Dendritic cell treated with granulocyte-macrophage colony-stimulating factor and Interleukin-4, amounts not matched to agents 40 ng/mL and 50 ng/mL, for 4 days (primary cell): ENCODE measurements at regions of chr14 and their contacts with region 1.

Region 1: DNA sequence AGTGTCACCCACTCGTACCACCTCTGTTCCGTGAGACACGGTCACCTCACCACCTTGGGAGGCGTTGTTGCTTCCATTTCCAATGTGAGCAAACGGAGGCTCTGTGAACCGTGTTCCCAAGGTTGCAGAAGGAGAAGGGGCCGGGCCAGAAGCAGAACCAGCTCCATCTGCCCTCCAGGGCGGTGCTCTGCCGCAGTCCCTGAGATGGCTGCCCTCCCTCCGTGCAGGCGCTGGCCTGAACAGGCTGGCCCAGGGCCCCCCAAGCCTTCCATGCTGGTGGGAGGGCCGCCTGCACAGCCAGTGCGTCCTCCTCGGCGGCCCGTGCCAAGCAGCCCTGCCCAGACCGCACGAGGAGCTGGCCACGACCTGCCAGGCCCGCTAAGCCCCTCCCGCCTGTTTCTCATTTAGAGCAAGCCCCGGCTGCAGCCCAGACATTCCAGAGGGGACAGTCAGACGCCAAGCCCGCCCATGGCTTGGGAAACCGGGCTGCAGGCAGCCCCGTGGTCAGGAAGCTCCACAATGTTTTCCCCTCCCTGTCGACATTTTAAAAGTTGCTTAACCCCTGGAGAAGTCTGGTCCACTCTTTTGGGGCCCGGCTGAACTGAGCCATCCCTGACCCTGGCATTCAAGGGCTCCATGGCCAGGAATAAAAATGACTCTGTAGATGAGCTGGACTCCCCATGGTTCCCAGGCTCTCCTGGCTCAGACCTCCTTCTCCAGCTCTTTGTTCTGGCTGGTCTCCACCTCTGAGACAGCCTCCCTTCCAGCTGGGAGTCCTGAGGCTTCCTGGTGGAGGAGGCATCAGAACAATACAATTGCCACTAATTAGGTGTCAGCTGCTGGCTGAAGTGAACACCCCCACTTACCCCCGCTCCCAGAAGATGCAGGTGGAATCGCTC is 236.0 kb downstream of the BCL11B start:
- H3K4me3 Mint-ChIP-seq: peak overlapping the region; percentile 80
- H3K27ac Mint-ChIP-seq: peak overlapping the region; percentile 94
- H3K4me1 Mint-ChIP-seq: peaks cover 55% of the 10 kb centered on the region
- H3K27me3 Mint-ChIP-seq: no peaks in the 10 kb centered on the region

Region 2: DNA sequence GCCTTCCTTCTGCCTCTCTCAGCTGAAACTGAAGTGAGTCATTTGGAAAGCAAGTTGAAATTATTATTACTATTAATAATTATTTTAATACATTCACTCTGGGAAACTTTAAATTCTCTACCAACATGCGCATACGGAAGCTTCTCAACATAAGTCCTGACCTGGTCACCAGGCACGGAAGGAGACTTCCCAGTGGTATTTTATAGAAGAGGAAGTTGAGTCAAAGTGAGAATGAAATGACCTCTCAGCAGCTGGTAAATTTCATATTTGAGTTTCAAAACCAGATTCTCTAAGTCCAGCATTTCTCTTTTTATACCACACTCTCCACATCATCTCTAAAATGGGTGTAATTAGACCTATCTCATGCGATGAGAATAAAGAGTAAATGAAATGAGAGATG is 1491.4 kb before region 1 on chr14:
- intact Hi-C with region 1: loop called (anchors 10 kb)
- H3K4me3 Mint-ChIP-seq: peak overlapping the region; percentile 49
- H3K27ac Mint-ChIP-seq: peak overlapping the region; percentile 88
- H3K4me1 Mint-ChIP-seq: peaks cover 54% of the 10 kb centered on the region
- H3K27me3 Mint-ChIP-seq: peaks cover 23% of the 10 kb centered on the region

Region 3: GRCh38 chr14:98957211-98958047 is 78.5 kb before region 1 on chr14:
- intact Hi-C with region 1: loop called (anchors 5 kb)
- H3K4me3 Mint-ChIP-seq: peak overlapping the region; percentile 52
- H3K27ac Mint-ChIP-seq: peak overlapping the region; percentile 67
- H3K4me1 Mint-ChIP-seq: peaks cover 51% of the 10 kb centered on the region
- H3K27me3 Mint-ChIP-seq: no peaks in the 10 kb centered on the region

Region 4: DNA sequence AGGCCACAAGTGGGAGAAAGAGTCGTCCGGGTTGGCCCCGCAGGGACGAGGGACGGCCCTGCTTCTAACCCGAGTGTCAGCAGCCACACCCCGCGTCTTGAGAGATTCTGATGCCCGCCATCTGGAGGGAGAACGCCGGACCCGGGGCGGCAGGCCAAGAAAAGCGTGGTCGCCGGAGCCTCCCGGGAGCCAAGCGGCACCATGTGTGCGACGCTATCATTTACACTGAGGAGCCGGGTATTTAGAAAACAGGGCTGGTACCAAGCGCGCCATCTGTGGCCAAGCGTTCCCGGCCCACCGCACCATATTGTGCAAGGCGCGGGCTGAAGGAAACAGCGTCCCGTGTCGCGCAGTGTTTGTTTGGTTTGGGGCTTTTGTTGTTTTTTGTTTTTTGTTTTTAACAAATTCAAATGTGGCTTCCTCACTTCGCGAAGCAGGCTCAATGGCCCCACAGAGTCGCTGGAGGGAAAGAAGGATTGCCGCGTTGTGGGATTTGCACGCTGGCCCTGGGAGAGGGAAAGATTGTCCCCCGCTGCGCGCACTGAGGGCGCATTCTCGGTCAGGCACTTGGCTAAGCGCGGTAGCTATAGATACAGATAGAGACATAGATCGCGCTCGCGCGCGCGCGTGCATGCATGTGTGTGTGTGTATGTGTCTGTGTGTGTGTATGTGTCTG is 82.2 kb after region 1 on chr14:
- intact Hi-C with region 1: no loop called
- H3K4me3 Mint-ChIP-seq: peak overlapping the region; percentile 34
- H3K27ac Mint-ChIP-seq: no peak overlapping the region
- H3K4me1 Mint-ChIP-seq: peaks cover 7% of the 10 kb centered on the region
- H3K27me3 Mint-ChIP-seq: peaks cover 58% of the 10 kb centered on the region

Region 5: GRCh38 chr14:99480917-99481744 is 445.2 kb after region 1 on chr14 and contains the start of gene CCNK:
- intact Hi-C with region 1: loop called (anchors 10 kb)
- H3K4me3 Mint-ChIP-seq: peak within 1 kb of the TSS; percentile 94
- H3K27ac Mint-ChIP-seq: peak within 1 kb of the TSS; percentile 98
- H3K4me1 Mint-ChIP-seq: peaks cover 47% of the 10 kb centered on the region
- H3K27me3 Mint-ChIP-seq: no peaks in the 10 kb centered on the region